ENCODE measurements at regions of chr9 and their contacts with region 1.

Region 1: GRCh38 chr9:108761655-108762347 is 94.0 kb downstream of the ACTL7B start:
- DNase-seq: peak in 1 of 2 experiments; percentile 56
- H3K4me3 ChIP-seq: no peak overlapping the region
- H3K27ac ChIP-seq: no peak overlapping the region
- H3K4me1 ChIP-seq: no peaks in the 10 kb centered on the region
- H3K27me3 ChIP-seq: no peaks in the 10 kb centered on the region
- CTCF ChIP-seq: peak; percentile 92

Region 2: GRCh38 chr9:107465467-107466451 is 1296.0 kb before region 1 on chr9:
- CTCF ChIA-PET with region 1: no interaction called
- POLR2A ChIA-PET with region 1: no interaction called
- intact Hi-C with region 1: loop called (anchors 5 kb)
- DNase-seq: peak in 1 of 2 experiments; percentile 59
- H3K4me3 ChIP-seq: no peak overlapping the region
- H3K27ac ChIP-seq: no peak overlapping the region
- H3K4me1 ChIP-seq: peaks cover 5% of the 10 kb centered on the region; the same call in 1 of the 2 replicates
- H3K27me3 ChIP-seq: no peaks in the 10 kb centered on the region
- CTCF ChIP-seq: no peak

Region 3: GRCh38 chr9:108412755-108413154 is 349.0 kb before region 1 on chr9:
- CTCF ChIA-PET with region 1: no interaction called
- POLR2A ChIA-PET with region 1: no interaction called
- intact Hi-C with region 1: loop called (anchors 10 kb)
- DNase-seq: no peak
- H3K4me3 ChIP-seq: no peak overlapping the region
- H3K27ac ChIP-seq: no peak overlapping the region
- H3K4me1 ChIP-seq: no peaks in the 10 kb centered on the region
- H3K27me3 ChIP-seq: no peaks in the 10 kb centered on the region
- CTCF ChIP-seq: no peak

Region 4: DNA sequence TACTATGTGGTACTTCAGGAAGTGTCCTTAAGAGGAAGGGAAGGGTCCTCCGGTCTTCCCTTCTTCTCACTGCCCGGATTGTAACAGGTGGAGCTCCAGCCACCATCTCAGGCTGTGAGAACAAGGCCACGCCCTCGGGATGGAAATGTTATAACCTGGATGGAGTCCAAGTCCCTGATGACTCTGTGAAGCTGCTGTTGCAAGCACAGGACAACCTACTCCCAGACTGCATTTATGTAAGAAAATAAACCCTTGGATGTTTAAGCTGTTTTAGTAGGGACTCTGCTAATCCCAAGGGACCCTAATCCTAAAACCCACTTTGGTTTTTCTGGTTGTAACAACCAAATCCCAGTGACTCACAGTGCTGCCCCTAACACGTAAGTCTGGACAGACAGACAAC is 127.6 kb before region 1 on chr9:
- CTCF ChIA-PET with region 1: no interaction called
- POLR2A ChIA-PET with region 1: no interaction called
- intact Hi-C with region 1: loop called (anchors 5 kb)
- DNase-seq: peak; percentile 48 to 65
- H3K4me3 ChIP-seq: no peak overlapping the region
- H3K27ac ChIP-seq: peak overlapping the region; percentile 14; the same call in 1 of the 2 replicates
- H3K4me1 ChIP-seq: peaks cover 7% of the 10 kb centered on the region; the same call in 1 of the 2 replicates
- H3K27me3 ChIP-seq: no peaks in the 10 kb centered on the region
- CTCF ChIP-seq: no peak

Region 5: DNA sequence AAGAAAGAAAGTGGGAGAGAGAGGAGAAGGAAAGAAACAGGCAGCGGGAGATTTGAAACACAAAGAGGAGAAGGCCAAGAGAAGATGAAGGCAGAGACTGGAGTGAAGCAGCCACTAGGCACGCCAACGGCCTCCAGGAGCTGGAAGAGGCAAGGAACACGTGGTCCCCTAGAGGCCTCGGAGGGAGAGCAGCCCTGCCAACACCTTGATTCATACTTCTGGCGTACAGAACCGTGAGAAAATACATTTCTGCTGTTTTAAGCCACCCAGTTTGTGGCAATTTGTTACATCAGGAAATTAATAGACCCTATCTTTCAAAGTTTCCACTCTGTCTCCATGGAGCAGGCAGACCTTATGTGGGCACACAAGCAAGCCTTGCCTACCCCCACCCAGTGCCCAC is 39.4 kb before region 1 on chr9:
- CTCF ChIA-PET with region 1: no interaction called
- POLR2A ChIA-PET with region 1: no interaction called
- intact Hi-C with region 1: no loop called
- DNase-seq: no peak
- H3K4me3 ChIP-seq: no peak overlapping the region
- H3K27ac ChIP-seq: no peak overlapping the region
- H3K4me1 ChIP-seq: no peaks in the 10 kb centered on the region
- H3K27me3 ChIP-seq: no peaks in the 10 kb centered on the region
- CTCF ChIP-seq: no peak

Region 6: DNA sequence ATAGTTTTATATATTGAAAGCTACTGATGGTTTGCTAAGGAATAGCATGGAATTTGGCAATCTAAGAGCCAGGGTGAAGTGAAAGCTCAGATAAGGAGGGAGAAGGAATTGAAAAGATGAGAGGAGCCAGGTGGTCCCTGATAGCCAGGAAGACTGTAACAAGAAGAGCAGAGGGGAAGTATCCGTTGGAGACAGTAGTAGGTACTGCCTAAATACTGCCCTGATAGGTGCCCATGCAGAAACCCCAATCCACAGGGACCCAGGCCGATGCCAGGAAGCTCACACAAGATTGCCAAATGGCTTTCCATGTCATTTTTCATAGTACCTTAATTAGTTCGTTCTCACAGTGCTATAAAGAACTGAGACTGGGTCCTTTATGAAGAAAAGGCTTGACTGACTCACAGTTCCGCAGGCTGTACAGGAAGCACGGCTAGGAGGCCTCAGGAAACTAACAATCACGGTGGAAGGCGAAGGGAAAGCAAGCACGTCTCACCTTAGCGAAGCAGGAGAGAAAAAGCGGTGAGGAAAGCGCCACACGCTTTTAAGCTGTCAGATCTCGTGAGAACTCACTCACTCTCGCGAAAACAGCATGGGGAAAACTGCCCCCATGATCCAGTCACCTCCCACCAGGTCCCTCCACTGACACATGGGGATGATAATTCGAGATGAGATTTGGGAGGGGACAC is 81.0 kb after region 1 on chr9:
- CTCF ChIA-PET with region 1: no interaction called
- POLR2A ChIA-PET with region 1: no interaction called
- intact Hi-C with region 1: no loop called
- DNase-seq: no peak
- H3K4me3 ChIP-seq: no peak overlapping the region
- H3K27ac ChIP-seq: no peak overlapping the region
- H3K4me1 ChIP-seq: peaks cover 5% of the 10 kb centered on the region; the same call in 1 of the 2 replicates
- H3K27me3 ChIP-seq: no peaks in the 10 kb centered on the region
- CTCF ChIP-seq: no peak